CD4-positive, alpha-beta T cell (primary cell): ENCODE measurements at regions of chr11 and their contacts with region 1.

Region 1: DNA sequence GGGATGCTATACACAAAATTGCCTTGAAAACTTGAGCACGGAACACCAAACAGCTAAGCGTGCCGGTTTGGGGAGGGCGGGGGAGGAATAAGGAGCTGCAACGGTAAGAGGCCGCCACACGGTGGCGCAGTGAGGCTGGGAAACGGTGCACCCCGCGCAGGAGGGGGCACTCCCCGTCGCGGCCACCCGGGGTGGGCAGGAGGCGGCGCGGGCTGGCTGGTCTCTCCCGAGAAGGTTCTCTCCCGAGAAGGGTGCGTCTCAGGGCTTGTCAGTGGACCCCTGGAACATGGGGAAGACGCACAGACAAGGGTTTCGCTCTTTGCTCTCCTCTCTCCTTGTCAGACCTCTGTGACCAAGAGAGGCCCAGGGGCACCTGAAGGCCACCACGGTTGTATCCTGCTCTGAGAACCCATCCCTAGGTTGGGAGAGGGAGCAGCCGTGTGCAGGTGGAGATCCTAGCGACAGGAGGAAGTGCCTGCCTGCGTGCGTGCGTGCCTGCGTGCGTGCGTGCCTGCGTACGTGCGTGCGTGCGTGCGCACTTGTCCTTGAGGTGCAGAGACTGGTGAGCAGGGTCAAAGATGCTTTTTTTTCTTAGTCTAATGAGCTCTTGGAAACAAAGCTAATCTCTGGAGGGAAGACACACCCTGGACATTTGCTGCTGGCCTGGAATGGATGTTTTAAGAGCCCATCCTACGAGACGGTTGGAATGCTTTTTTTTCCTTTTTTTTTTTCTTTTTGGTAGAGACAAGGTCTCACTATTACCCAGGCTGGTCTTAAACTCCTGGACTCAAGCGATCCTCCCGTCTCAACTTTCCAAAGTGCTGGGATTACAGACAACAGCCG is 18.1 kb upstream of the JAM3 start:
- DNase-seq: peak; percentile 55 to 87 (median 70)
- ATAC-seq: peak; percentile 96
- H3K4me3 ChIP-seq: no peak overlapping the region
- H3K4me3 Mint-ChIP-seq: no peak overlapping the region
- H3K27ac ChIP-seq: no peak overlapping the region
- H3K27ac Mint-ChIP-seq: no peak overlapping the region
- H3K4me1 ChIP-seq: peaks cover 8% of the 10 kb centered on the region
- H3K4me1 Mint-ChIP-seq: peaks cover 5% of the 10 kb centered on the region
- H3K27me3 ChIP-seq: peaks cover 0 to 9% of the 10 kb centered on the region in 2 experiments
- H3K27me3 Mint-ChIP-seq: peaks cover 34% of the 10 kb centered on the region
- CTCF ChIP-seq: peak; percentile 93

Region 2: GRCh38 chr11:133966921-133967598 is 83.7 kb before region 1 on chr11:
- CTCF ChIA-PET with region 1: no interaction called
- POLR2A ChIA-PET with region 1: no interaction called
- intact Hi-C with region 1: loop called in 1 of 2 experiments (anchors 2 kb)
- DNase-seq: peak; percentile 45 to 76 (median 62)
- ATAC-seq: peak; percentile 85
- H3K4me3 ChIP-seq: peak overlapping the region; percentile 53
- H3K4me3 Mint-ChIP-seq: peak overlapping the region; percentile 86
- H3K27ac ChIP-seq: no peak overlapping the region
- H3K27ac Mint-ChIP-seq: peak overlapping the region; percentile 45
- H3K4me1 ChIP-seq: peaks cover 14% of the 10 kb centered on the region
- H3K4me1 Mint-ChIP-seq: peaks cover 13% of the 10 kb centered on the region
- H3K27me3 ChIP-seq: peaks cover 2 to 5% of the 10 kb centered on the region in 2 experiments
- H3K27me3 Mint-ChIP-seq: peaks cover 19% of the 10 kb centered on the region
- CTCF ChIP-seq: peak; percentile 66

Region 3: DNA sequence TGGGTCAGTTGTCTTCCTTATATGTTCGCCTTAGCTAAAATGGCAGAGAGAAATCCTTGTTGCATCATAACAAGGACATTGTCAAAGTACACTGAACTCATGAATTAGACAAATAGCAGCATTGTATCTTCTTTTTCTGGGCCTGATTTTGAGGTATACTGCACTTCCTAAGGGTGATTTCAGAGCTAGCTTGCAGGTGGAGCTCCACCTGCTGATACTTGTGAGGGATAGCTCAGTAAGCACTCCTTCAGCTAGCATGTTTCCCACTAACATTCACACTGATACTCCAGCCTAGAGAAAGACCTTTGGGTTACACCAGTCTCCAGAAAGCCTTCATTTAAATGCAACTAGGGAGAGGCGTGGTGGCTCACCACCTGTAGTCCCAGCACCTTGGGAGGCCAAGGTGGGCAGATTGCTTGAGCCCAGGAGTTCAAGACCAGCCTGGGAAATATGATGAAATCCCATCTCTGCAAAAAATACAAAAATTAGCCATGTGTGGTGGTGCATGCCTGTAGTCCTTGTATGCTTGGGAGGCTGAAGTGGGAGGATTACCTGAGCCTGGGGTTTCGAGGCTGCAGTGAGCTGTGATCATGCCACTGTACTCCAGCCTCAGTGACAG is 47.9 kb after region 1 on chr11:
- CTCF ChIA-PET with region 1: interaction called, 4 read pairs
- POLR2A ChIA-PET with region 1: interaction called, 3 read pairs
- intact Hi-C with region 1: loop called (anchors 2 kb)
- DNase-seq: peak in 3 of 14 experiments; percentile 15 to 44 (median 28)
- ATAC-seq: peak; percentile 49
- H3K4me3 ChIP-seq: no peak overlapping the region
- H3K4me3 Mint-ChIP-seq: no peak overlapping the region
- H3K27ac ChIP-seq: no peak overlapping the region
- H3K27ac Mint-ChIP-seq: no peak overlapping the region
- H3K4me1 ChIP-seq: no peaks in the 10 kb centered on the region
- H3K4me1 Mint-ChIP-seq: no peaks in the 10 kb centered on the region
- H3K27me3 ChIP-seq: no peaks in the 10 kb centered on the region
- H3K27me3 Mint-ChIP-seq: no peaks in the 10 kb centered on the region
- CTCF ChIP-seq: no peak

Region 4: GRCh38 chr11:134139873-134140331 is 89.1 kb after region 1 on chr11:
- CTCF ChIA-PET with region 1: interaction called, 5 read pairs
- POLR2A ChIA-PET with region 1: no interaction called
- intact Hi-C with region 1: loop called (anchors 1 kb)
- DNase-seq: peak in 13 of 14 experiments; percentile 6 to 76 (median 32)
- ATAC-seq: peak; percentile 88
- H3K4me3 ChIP-seq: no peak overlapping the region
- H3K4me3 Mint-ChIP-seq: no peak overlapping the region
- H3K27ac ChIP-seq: no peak overlapping the region
- H3K27ac Mint-ChIP-seq: no peak overlapping the region
- H3K4me1 ChIP-seq: peaks cover 5% of the 10 kb centered on the region
- H3K4me1 Mint-ChIP-seq: peaks cover 4% of the 10 kb centered on the region
- H3K27me3 ChIP-seq: no peaks in the 10 kb centered on the region
- H3K27me3 Mint-ChIP-seq: no peaks in the 10 kb centered on the region
- CTCF ChIP-seq: peak; percentile 77